PC-3 (cell line): ENCODE measurements at regions of chr3 and their contacts with region 1.

Region 1: DNA sequence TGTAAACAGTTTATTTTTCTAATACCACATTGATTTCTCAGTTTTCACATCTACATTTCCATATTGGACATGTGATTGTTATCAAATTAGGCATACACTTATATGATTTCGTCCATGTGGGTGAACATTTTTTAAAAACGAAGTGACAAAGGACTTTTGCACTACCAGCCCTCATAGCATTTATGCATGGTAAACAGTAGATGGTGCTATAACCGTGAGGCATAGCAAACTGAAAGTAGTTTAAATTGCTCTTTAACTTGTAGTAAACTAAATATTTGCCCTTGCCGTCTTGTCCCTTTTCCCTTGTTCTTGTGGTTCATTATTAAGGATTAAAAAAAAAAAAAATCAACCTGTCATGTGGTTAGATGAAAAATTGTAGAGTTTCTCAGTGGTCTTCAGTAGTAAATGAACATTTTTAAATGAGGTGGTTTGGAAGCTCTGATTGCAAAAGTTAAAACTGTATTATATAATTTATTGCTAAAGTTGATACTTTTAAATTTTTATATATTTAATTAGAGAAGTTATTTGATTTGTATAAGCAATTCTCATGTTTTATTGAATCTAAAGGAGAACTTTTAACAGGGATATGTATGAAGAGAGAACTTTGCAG is 24.0 kb downstream of the STX19 start:
- DNase-seq: peak; percentile 70
- ATAC-seq: peak; percentile 89
- H3K4me3 ChIP-seq: peak overlapping the region; percentile 44; the same call in 1 of the 2 replicates
- H3K27ac ChIP-seq: no peak overlapping the region
- H3K4me1 ChIP-seq: no peaks in the 10 kb centered on the region
- H3K27me3 ChIP-seq: no peaks in the 10 kb centered on the region
- CTCF ChIP-seq: peak; percentile 96

Region 2: DNA sequence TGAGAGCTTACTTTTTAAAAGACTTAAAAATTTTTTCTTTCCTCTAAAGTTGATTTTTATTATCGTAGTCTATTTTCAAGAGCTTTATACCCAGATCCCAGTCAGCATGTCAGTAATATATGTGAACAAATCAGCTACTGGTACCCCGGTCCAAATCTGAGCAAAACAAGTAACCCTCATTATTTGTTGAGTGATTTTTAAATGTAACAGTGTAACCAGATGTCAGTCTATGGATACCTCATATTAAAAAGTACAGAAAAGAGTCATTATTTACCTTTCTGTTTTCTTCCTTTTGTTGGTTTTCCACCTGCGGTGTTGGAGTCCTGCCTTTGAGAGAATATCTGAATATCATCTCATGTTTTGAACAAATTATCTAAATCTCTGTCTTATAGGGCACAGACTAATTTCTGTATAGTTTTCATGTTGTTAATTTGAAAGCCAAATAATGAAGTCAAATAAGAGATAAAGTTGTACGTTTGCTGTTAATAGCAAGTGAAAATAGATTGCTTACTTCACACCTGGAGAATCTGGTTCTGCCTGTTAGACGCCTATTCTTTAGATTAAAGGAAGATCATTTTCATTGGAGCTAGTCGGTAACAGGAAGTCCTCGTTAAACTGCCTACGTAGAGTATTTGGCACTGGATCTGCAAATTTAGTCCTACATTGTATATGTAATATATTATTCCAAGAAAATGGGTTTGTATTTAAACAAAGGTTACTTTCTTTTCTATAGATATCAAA is 23.9 kb after region 1 on chr3 and contains the start of gene STX19:
- CTCF ChIA-PET with region 1: no interaction called
- POLR2A ChIA-PET with region 1: interaction called, 5 read pairs
- intact Hi-C with region 1: loop called (anchors 1 kb)
- DNase-seq: peak; percentile 70
- ATAC-seq: no peak; the same call in 1 of the 2 replicates
- H3K4me3 ChIP-seq: peak within 1 kb of the TSS; percentile 33; the same call in 1 of the 2 replicates
- H3K27ac ChIP-seq: peak within 1 kb of the TSS; percentile 10
- H3K4me1 ChIP-seq: peaks cover 34% of the 10 kb centered on the region
- H3K27me3 ChIP-seq: no peaks in the 10 kb centered on the region
- CTCF ChIP-seq: no peak
- total RNA-seq, gene STX19: not detected in 2 replicates

Region 3: GRCh38 chr3:94062431-94063404 is 58.3 kb after region 1 on chr3 and contains the starts of genes DHFR2 and NSUN3:
- CTCF ChIA-PET with region 1: no interaction called
- POLR2A ChIA-PET with region 1: no interaction called
- intact Hi-C with region 1: loop called (anchors 1 kb)
- DNase-seq: peak; percentile 98
- ATAC-seq: peak; percentile 91
- H3K4me3 ChIP-seq: peak within 1 kb of the TSS; percentile 91
- H3K27ac ChIP-seq: peak within 1 kb of the TSS; percentile 91
- H3K4me1 ChIP-seq: peaks cover 18% of the 10 kb centered on the region
- H3K27me3 ChIP-seq: no peaks in the 10 kb centered on the region
- CTCF ChIP-seq: no peak
- total RNA-seq, gene DHFR2: 2.2 and 2.6 TPM in 2 replicates
- total RNA-seq, gene NSUN3: 4.4 and 5.3 TPM in 2 replicates

Region 4: GRCh38 chr3:94069194-94069813 is 64.9 kb after region 1 on chr3:
- CTCF ChIA-PET with region 1: no interaction called
- POLR2A ChIA-PET with region 1: no interaction called
- intact Hi-C with region 1: loop called (anchors 1 kb)
- DNase-seq: peak; percentile 58
- ATAC-seq: peak; percentile 24; the same call in 1 of the 2 replicates
- H3K4me3 ChIP-seq: no peak overlapping the region
- H3K27ac ChIP-seq: no peak overlapping the region
- H3K4me1 ChIP-seq: peaks cover 6% of the 10 kb centered on the region
- H3K27me3 ChIP-seq: no peaks in the 10 kb centered on the region
- CTCF ChIP-seq: peak; percentile 83

Region 5: DNA sequence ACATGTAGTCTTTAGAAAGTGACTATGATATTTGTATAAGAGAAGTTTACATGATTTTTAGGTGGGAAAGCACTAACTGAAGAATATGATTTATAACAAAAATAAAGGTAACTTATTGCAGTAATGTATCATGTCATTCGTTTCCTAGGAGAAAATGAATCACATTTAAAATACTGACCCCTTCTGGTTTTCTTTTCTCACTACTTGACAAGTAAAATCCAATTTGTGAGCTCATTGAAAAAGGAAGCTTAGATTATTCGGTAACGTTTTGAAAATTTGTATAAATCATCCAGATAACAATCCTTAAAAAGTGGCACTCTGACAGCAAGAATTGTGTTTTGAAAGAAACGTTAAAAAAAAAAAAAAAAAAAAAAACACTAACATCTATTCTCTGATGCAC is 97.4 kb after region 1 on chr3:
- CTCF ChIA-PET with region 1: no interaction called
- POLR2A ChIA-PET with region 1: no interaction called
- intact Hi-C with region 1: loop called (anchors 1 kb)
- DNase-seq: peak; percentile 58
- ATAC-seq: no peak; the same call in 1 of the 2 replicates
- H3K4me3 ChIP-seq: no peak overlapping the region
- H3K27ac ChIP-seq: no peak overlapping the region
- H3K4me1 ChIP-seq: no peaks in the 10 kb centered on the region
- H3K27me3 ChIP-seq: no peaks in the 10 kb centered on the region
- CTCF ChIP-seq: peak; percentile 59

Region 6: GRCh38 chr3:94173676-94174434 is 169.4 kb after region 1 on chr3:
- CTCF ChIA-PET with region 1: no interaction called
- POLR2A ChIA-PET with region 1: no interaction called
- intact Hi-C with region 1: loop called (anchors 10 kb)
- DNase-seq: peak; percentile 76
- ATAC-seq: peak; percentile 94
- H3K4me3 ChIP-seq: peak overlapping the region; percentile 6; the same call in 1 of the 2 replicates
- H3K27ac ChIP-seq: peak overlapping the region; percentile 55
- H3K4me1 ChIP-seq: peaks cover 26% of the 10 kb centered on the region
- H3K27me3 ChIP-seq: no peaks in the 10 kb centered on the region
- CTCF ChIP-seq: no peak